ENCODE measurements at regions of chr3 and their contacts with region 1.

Region 1: GRCh38 chr3:133988631-133989161 is 41.0 kb downstream of the SLCO2A1 start:
- DNase-seq: peak; percentile 34
- H3K4me3 ChIP-seq: no peak overlapping the region
- H3K27ac ChIP-seq: no peak overlapping the region
- H3K4me1 ChIP-seq: peaks cover 24% of the 10 kb centered on the region
- H3K27me3 ChIP-seq: no peaks in the 10 kb centered on the region
- CTCF ChIP-seq: no peak

Region 2: GRCh38 chr3:134002306-134002705 is 13.6 kb after region 1 on chr3:
- CTCF ChIA-PET with region 1: no interaction called
- dilution Hi-C with region 1: no loop called
- in situ Hi-C with region 1: no loop called
- intact Hi-C with region 1: loop called (anchors 2 kb)
- DNase-seq: peak; percentile 31
- H3K4me3 ChIP-seq: no peak overlapping the region
- H3K27ac ChIP-seq: no peak overlapping the region
- H3K4me1 ChIP-seq: peaks cover 7% of the 10 kb centered on the region
- H3K27me3 ChIP-seq: no peaks in the 10 kb centered on the region
- CTCF ChIP-seq: no peak